ENCODE measurements at regions of chr2 and their contacts with region 1.

Region 1: DNA sequence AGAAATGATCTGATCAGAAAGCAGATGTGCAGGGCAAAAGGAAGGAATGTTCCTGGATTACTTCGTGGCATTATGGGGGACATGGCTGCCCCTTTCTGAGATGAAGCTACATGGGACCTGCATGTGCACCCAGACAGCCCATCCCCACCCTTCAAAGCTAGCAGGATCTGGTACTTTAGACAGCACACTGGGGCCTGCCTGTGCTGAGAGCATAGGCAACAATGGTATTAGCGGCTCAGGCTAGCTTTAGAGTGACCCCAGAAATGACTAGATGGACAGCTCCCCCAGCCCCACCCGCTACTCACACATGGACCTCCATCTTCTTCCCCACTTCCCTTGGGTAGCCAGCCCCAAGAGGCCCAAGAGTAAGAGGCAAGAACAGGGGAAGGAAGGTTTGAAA is 61.5 kb upstream of the NFE2L2 start:
- DNase-seq: no peak
- ATAC-seq: no peak
- H3K4me3 ChIP-seq: no peak overlapping the region
- H3K27ac ChIP-seq: no peak overlapping the region
- H3K4me1 ChIP-seq: 0 out of 2 replicates have a peak, but pooled peaks cover 3% of the 10 kb centered on the region
- H3K27me3 ChIP-seq: no peaks in the 10 kb centered on the region
- CTCF ChIP-seq: no peak

Region 2: GRCh38 chr2:177275041-177276020 is 50.7 kb before region 1 on chr2:
- CTCF ChIA-PET with region 1: interaction called, 5 read pairs
- POLR2A ChIA-PET with region 1: no interaction called
- in situ Hi-C with region 1: no loop called
- intact Hi-C with region 1: loop called (anchors 2 kb)
- DNase-seq: no peak
- ATAC-seq: peak; percentile 71
- H3K4me3 ChIP-seq: peak overlapping the region in 1 of 2 experiments; percentile 12; a peak in 2 of 4 replicates
- H3K27ac ChIP-seq: peak overlapping the region; percentile 99
- H3K4me1 ChIP-seq: peaks cover 39% of the 10 kb centered on the region
- H3K27me3 ChIP-seq: no peaks in the 10 kb centered on the region
- CTCF ChIP-seq: no peak

Region 3: GRCh38 chr2:177296040-177296439 is 30.0 kb before region 1 on chr2:
- CTCF ChIA-PET with region 1: no interaction called
- POLR2A ChIA-PET with region 1: no interaction called
- in situ Hi-C with region 1: no loop called
- intact Hi-C with region 1: no loop called
- DNase-seq: no peak
- ATAC-seq: peak; percentile 68
- H3K4me3 ChIP-seq: no peak overlapping the region
- H3K27ac ChIP-seq: peak overlapping the region; percentile 70; the same call in 1 of the 2 replicates
- H3K4me1 ChIP-seq: peaks cover 8% of the 10 kb centered on the region; the same call in 1 of the 2 replicates
- H3K27me3 ChIP-seq: no peaks in the 10 kb centered on the region
- CTCF ChIP-seq: peak; percentile 57; the same call in 1 of the 2 replicates